Kidney (tissue), 22 donors: ENCODE measurements at regions of chr15 and their contacts with region 1.

Region 1: GRCh38 chr15:37100109-37100965 is at the start of gene MEIS2:
- DNase-seq: peak; percentile 96 to 98 (median 97)
- H3K4me3 ChIP-seq: peak within 1 kb of the TSS; percentile 77 to 90 (median 81)
- H3K27ac ChIP-seq: peak within 1 kb of the TSS; percentile 95 to 97
- H3K4me1 ChIP-seq: no peaks in the 10 kb centered on the region
- H3K27me3 ChIP-seq: peaks cover 8% of the 10 kb centered on the region
- CTCF ChIP-seq: no peak
- total RNA-seq, gene MEIS2: 50.9 TPM

Region 2: DNA sequence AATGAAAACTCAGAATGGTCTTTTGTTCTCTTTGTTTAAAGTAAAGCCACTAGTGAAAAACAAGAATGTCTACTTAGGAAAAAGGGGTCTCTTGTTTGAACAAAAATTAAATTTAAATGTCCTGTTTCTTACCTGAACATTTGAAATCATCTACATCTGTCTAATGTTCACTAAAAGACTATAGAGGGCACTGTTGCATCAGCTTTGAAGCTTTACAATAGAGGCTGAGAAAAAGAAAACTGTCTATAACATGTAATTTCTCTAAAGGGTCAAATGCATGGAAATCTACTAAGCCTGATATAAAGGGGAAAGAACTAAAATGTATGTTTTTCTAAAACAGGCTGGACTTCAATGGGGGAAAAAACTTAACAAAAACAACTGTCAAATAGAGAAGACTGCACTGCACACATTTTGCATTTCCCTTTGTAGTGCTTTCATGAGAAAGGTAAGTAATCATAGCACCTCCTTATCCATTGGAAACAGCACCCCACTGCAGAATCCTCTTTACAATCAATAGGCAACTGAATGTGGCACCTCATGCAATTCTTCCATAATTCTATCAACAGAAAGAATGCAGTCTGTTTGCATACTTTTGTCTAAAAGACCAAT is 1580.7 kb before region 1 on chr15:
- intact Hi-C with region 1: loop called (anchors 10 kb)
- DNase-seq: peak in 2 of 5 donors; percentile 84 to 92
- H3K4me3 ChIP-seq: no peak overlapping the region
- H3K27ac ChIP-seq: no peak overlapping the region
- H3K4me1 ChIP-seq: peaks cover 0 to 10% (median 2%) of the 10 kb centered on the region in 3 donors
- H3K27me3 ChIP-seq: no peaks in the 10 kb centered on the region
- CTCF ChIP-seq: peak; percentile 57

Region 3: GRCh38 chr15:36883713-36884517 is 216.4 kb before region 1 on chr15:
- intact Hi-C with region 1: loop called (anchors 10 kb)
- DNase-seq: peak; percentile 93 to 98 (median 96)
- H3K4me3 ChIP-seq: peak overlapping the region; percentile 61 to 71 (median 66)
- H3K27ac ChIP-seq: no peak overlapping the region
- H3K4me1 ChIP-seq: peaks cover 0 to 11% (median 8%) of the 10 kb centered on the region in 3 donors
- H3K27me3 ChIP-seq: peaks cover 28% of the 10 kb centered on the region
- CTCF ChIP-seq: peak; percentile 73

Region 4: GRCh38 chr15:36951731-36952247 is 148.5 kb before region 1 on chr15:
- intact Hi-C with region 1: no loop called
- DNase-seq: no peak
- H3K4me3 ChIP-seq: no peak overlapping the region
- H3K27ac ChIP-seq: no peak overlapping the region
- H3K4me1 ChIP-seq: no peaks in the 10 kb centered on the region
- H3K27me3 ChIP-seq: no peaks in the 10 kb centered on the region
- CTCF ChIP-seq: no peak